ENCODE measurements at regions of chr12 and their contacts with region 1.

Region 1: DNA sequence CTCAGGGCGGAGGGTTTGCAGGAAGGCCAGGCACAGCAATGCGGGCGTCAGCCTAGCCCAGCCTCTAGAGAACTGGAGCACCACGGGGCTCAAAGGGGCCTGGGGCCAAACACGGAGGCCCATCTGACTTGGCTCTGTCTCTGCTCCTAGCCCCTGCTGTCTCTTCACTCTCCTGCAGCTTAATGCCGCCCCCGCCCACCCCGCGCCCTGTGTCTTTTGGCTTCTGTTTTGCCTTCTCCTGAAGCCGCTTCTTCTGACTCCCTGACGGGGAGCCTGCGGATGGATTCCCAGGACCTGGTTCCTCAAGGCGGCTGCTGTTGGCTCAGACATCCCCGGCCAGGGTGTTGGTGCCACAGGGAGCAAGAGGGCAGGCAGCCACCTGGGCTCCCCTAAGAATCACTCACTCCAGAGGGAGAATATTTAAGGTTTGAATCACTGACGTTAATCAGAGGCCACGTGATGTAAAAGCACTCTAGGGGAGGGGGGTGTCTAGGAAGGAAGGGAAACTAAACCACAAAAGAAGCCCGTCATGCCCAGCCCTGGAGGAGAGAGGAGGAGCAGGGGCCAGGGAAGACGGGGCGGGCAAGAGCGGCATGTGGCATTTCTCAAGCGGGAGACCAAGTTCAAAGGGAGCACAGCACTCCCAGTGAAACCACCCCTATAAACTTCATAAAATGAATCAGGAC is 36.9 kb upstream of the PRMT8 start:
- DNase-seq: no peak
- H3K4me3 ChIP-seq: no peak overlapping the region
- H3K27ac ChIP-seq: no peak overlapping the region
- H3K4me1 ChIP-seq: peaks cover 0 to 11% (median 4%) of the 10 kb centered on the region in 4 experiments; a peak in 3 of 7 replicates
- H3K27me3 ChIP-seq: peaks cover 0 to 6% (median 4%) of the 10 kb centered on the region in 4 experiments; a peak in 4 of 7 replicates
- CTCF ChIP-seq: no peak
- EP300 ChIP-seq: no peak
- POLR2A ChIP-seq: no peak
- RAD21 ChIP-seq: no peak

Region 2: GRCh38 chr12:3326156-3326849 is 127.8 kb before region 1 on chr12:
- CTCF ChIA-PET with region 1: interaction called, 21 read pairs
- POLR2A ChIA-PET with region 1: interaction called, 3 read pairs
- DNase-seq: no peak
- H3K4me3 ChIP-seq: no peak overlapping the region
- H3K27ac ChIP-seq: no peak overlapping the region
- H3K4me1 ChIP-seq: no peaks in the 10 kb centered on the region; a peak in 1 of 7 replicates
- H3K27me3 ChIP-seq: no peaks in the 10 kb centered on the region
- CTCF ChIP-seq: peak; percentile 69 to 82 (median 70)
- EP300 ChIP-seq: no peak
- POLR2A ChIP-seq: no peak
- RAD21 ChIP-seq: peak; percentile 57 to 68

Region 3: DNA sequence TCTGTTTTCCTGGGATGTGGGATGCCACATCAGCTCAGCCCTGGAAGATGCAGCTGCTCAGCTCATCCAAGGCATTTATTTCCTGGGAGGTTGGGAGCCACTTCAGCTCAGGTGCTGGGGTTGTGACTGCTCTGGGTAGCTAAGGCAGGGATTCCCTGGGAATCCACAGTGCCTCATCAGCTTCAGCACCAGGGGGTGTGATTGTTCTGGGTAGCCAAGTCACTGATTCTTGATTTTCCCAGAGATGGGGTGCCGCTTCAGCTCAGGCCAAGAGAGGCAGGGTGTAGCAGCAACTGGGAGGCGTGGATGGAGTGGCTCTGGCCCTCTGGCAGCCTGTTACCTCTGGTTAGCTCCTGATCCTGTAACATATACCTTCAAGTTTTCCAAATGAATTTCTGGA is 44.5 kb before region 1 on chr12:
- CTCF ChIA-PET with region 1: interaction called, 23 read pairs
- POLR2A ChIA-PET with region 1: no interaction called
- DNase-seq: no peak
- H3K4me3 ChIP-seq: no peak overlapping the region
- H3K27ac ChIP-seq: no peak overlapping the region
- H3K4me1 ChIP-seq: no peaks in the 10 kb centered on the region
- H3K27me3 ChIP-seq: no peaks in the 10 kb centered on the region
- CTCF ChIP-seq: peak in 1 of 3 experiments; percentile 14; a peak in 1 of 4 replicates
- EP300 ChIP-seq: no peak
- POLR2A ChIP-seq: no peak
- RAD21 ChIP-seq: peak; percentile 11 to 47; a peak in 1 of 4 replicates

Region 4: GRCh38 chr12:3432176-3432742 is 21.9 kb before region 1 on chr12:
- CTCF ChIA-PET with region 1: interaction called, 12 read pairs
- POLR2A ChIA-PET with region 1: no interaction called
- DNase-seq: no peak
- H3K4me3 ChIP-seq: no peak overlapping the region
- H3K27ac ChIP-seq: no peak overlapping the region
- H3K4me1 ChIP-seq: peaks cover 2 to 13% (median 8%) of the 10 kb centered on the region in 4 experiments
- H3K27me3 ChIP-seq: no peaks in the 10 kb centered on the region
- CTCF ChIP-seq: no peak
- EP300 ChIP-seq: no peak
- POLR2A ChIP-seq: no peak
- RAD21 ChIP-seq: no peak

Region 5: DNA sequence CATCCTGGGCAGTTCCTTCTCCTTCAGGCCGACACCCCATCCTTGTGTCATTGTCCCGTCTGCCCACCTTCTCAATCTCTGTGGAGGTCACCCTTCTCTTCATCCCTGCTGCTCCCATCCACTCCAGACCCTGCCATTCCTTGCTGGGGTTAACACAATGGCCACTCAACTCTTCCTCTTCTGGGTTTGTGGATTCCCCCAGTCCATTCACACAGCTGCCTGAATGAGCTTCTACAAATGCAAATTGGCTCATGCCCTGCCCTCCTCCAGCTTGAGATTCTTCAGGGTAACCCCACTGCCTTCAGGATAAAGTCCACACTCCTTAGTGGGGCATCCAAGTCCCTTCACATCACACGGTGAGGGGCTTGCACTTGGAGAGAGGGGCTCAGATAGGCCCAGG is 19.7 kb after region 1 on chr12:
- CTCF ChIA-PET with region 1: interaction called, 12 read pairs
- POLR2A ChIA-PET with region 1: interaction called, 3 read pairs
- DNase-seq: no peak
- H3K4me3 ChIP-seq: no peak overlapping the region
- H3K27ac ChIP-seq: no peak overlapping the region
- H3K4me1 ChIP-seq: peaks cover 6 to 14% (median 9%) of the 10 kb centered on the region in 4 experiments
- H3K27me3 ChIP-seq: no peaks in the 10 kb centered on the region; a peak in 1 of 7 replicates
- CTCF ChIP-seq: no peak
- EP300 ChIP-seq: no peak
- POLR2A ChIP-seq: no peak
- RAD21 ChIP-seq: no peak

Measured in H1 (cell line).